Panc1 (cell line): ENCODE measurements at regions of chr3 and their contacts with region 1.

Region 1: DNA sequence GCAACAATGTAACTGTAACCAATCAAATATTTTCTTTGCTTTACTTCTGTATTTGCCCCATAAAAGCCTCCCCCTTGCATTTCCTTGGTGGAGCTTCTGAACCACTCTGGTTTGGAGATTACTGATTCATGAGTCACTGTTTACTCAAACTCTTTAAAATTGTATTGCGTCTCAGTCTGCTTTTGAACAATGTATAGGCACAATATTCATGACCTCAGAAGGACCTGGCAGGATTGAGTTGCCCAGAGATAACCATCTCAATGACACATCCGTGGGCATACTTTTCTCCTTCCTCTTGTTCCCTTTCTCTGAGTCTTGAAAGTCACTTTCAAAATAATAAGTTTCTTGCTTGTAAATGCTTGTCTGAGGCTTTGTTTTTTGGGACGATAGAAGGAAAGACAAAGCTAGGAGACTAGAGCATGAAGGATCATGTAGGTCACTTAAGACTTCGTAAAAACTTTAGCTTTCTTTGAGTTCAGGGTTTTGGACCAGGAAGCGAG is 57.1 kb upstream of the POU1F1 start:
- DNase-seq: peak; percentile 89
- ATAC-seq: peak; percentile 98
- H3K4me3 ChIP-seq: no peak overlapping the region
- H3K27ac ChIP-seq: peak overlapping the region; percentile 98
- H3K4me1 ChIP-seq: peaks cover 18% of the 10 kb centered on the region; the same call in 1 of the 2 replicates
- H3K27me3 ChIP-seq: no peaks in the 10 kb centered on the region
- CTCF ChIP-seq: no peak

Region 2: DNA sequence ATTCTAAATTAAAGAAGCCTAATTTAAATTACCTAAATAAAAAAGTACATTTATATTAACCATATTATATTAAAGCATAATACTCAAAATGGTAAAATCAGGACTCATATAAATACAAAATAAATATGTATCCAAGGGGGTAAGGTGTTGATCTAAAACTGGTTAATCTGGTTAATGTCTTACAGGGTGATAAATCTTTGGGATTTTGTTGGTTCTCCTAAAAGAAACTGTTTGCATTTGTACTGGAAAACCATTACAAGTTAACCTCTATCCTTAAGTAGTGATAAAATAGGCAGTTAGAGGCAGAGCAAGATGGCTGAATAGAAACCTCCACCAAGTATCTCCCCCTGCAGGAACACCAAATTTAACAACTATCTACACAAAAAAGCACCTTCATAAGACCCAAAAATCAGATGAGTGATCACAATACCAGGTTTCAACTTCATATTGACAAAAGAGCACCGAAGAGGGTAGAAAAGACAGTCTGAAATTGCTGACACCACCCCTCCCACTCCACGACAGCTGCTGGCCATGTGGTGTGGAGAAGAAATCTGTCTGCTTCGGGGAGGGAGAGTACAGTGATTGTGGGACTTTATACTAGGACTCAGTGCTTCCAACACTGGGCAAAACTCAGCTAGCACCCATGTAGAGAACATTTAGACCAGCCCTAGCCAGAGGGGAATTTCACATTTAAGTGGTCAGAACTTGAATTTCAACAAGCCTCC is 12.9 kb before region 1 on chr3:
- CTCF ChIA-PET with region 1: no interaction called
- POLR2A ChIA-PET with region 1: no interaction called
- in situ Hi-C with region 1: no loop called
- intact Hi-C with region 1: loop called (anchors 1 kb)
- DNase-seq: no peak
- ATAC-seq: no peak
- H3K4me3 ChIP-seq: no peak overlapping the region
- H3K27ac ChIP-seq: peak overlapping the region; percentile 54; the same call in 1 of the 2 replicates
- H3K4me1 ChIP-seq: no peaks in the 10 kb centered on the region
- H3K27me3 ChIP-seq: no peaks in the 10 kb centered on the region
- CTCF ChIP-seq: no peak

Region 3: DNA sequence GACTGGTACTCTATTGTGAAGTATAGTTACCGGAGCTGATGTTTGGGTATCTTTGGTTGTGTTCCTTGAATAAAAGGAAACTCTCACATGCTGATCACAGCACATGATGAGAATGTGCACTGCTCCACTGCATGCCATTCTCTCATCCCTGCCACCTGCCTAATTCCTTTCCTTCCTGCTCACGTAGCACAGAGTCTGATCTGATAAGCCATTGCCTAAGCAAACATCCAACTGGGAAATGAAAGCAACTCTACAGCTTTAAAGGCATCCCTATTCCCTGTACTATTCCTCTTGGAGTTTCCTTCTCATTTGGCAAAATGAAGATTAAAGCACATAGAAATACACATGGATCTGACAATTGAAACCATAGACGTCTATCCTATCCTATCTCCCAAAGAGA is 1176.1 kb after region 1 on chr3:
- CTCF ChIA-PET with region 1: no interaction called
- POLR2A ChIA-PET with region 1: no interaction called
- in situ Hi-C with region 1: no loop called
- intact Hi-C with region 1: no loop called
- DNase-seq: no peak
- ATAC-seq: no peak
- H3K4me3 ChIP-seq: no peak overlapping the region
- H3K27ac ChIP-seq: no peak overlapping the region
- H3K4me1 ChIP-seq: no peaks in the 10 kb centered on the region
- H3K27me3 ChIP-seq: no peaks in the 10 kb centered on the region
- CTCF ChIP-seq: no peak